GM13977 (cell line): ENCODE measurements at regions of chr3 and their contacts with region 1.

Region 1: GRCh38 chr3:17894434-17895060 is 152.1 kb upstream of the TBC1D5 start:
- DNase-seq: no peak
- CTCF ChIP-seq: peak; percentile 71

Region 2: GRCh38 chr3:18295171-18295920 is 400.8 kb after region 1 on chr3:
- in situ Hi-C with region 1: loop called (anchors 25 kb)
- DNase-seq: peak; percentile 18
- CTCF ChIP-seq: peak; percentile 82

Region 3: GRCh38 chr3:18758047-18758704 is 863.6 kb after region 1 on chr3:
- in situ Hi-C with region 1: loop called (anchors 25 kb)
- DNase-seq: peak; percentile 12
- CTCF ChIP-seq: peak; percentile 74